B cell (primary cell): ENCODE measurements at regions of chr4 and their contacts with region 1.

Region 1: GRCh38 chr4:101264989-101265815 is 82.1 kb downstream of the PPP3CA start:
- DNase-seq: no peak
- ATAC-seq: no peak
- H3K4me3 ChIP-seq: no peak overlapping the region
- H3K4me3 Mint-ChIP-seq: peak overlapping the region; percentile 63
- H3K27ac ChIP-seq: no peak overlapping the region
- H3K27ac Mint-ChIP-seq: peak overlapping the region; percentile 76
- H3K4me1 ChIP-seq: peaks cover 33 to 65% of the 10 kb centered on the region in 2 donors
- H3K4me1 Mint-ChIP-seq: peaks cover 82% of the 10 kb centered on the region
- H3K27me3 ChIP-seq: no peaks in the 10 kb centered on the region
- H3K27me3 Mint-ChIP-seq: no peaks in the 10 kb centered on the region
- CTCF ChIP-seq: no peak

Region 2: GRCh38 chr4:101232074-101232776 is 33.0 kb before region 1 on chr4:
- CTCF ChIA-PET with region 1: no interaction called
- POLR2A ChIA-PET with region 1: no interaction called
- intact Hi-C with region 1: loop called (anchors 5 kb)
- DNase-seq: no peak
- ATAC-seq: no peak
- H3K4me3 ChIP-seq: no peak overlapping the region
- H3K4me3 Mint-ChIP-seq: no peak overlapping the region
- H3K27ac ChIP-seq: no peak overlapping the region
- H3K27ac Mint-ChIP-seq: no peak overlapping the region
- H3K4me1 ChIP-seq: peaks cover 9 to 21% of the 10 kb centered on the region in 2 donors
- H3K4me1 Mint-ChIP-seq: peaks cover 53% of the 10 kb centered on the region
- H3K27me3 ChIP-seq: no peaks in the 10 kb centered on the region
- H3K27me3 Mint-ChIP-seq: no peaks in the 10 kb centered on the region
- CTCF ChIP-seq: no peak